Common myeloid progenitor, CD34-positive (primary cell): ENCODE measurements at regions of chr15 and their contacts with region 1.

Region 1: GRCh38 chr15:92808978-92809879 is 90.9 kb upstream of the CHD2 start:
- DNase-seq: peak; percentile 98 to 99 (median 99)
- H3K4me3 ChIP-seq: peak overlapping the region; percentile 29 to 81 (median 75)
- H3K27ac ChIP-seq: peak overlapping the region; percentile 96
- H3K4me1 ChIP-seq: peaks cover 19 to 50% (median 33%) of the 10 kb centered on the region in 4 experiments
- H3K27me3 ChIP-seq: no peaks in the 10 kb centered on the region

Region 2: DNA sequence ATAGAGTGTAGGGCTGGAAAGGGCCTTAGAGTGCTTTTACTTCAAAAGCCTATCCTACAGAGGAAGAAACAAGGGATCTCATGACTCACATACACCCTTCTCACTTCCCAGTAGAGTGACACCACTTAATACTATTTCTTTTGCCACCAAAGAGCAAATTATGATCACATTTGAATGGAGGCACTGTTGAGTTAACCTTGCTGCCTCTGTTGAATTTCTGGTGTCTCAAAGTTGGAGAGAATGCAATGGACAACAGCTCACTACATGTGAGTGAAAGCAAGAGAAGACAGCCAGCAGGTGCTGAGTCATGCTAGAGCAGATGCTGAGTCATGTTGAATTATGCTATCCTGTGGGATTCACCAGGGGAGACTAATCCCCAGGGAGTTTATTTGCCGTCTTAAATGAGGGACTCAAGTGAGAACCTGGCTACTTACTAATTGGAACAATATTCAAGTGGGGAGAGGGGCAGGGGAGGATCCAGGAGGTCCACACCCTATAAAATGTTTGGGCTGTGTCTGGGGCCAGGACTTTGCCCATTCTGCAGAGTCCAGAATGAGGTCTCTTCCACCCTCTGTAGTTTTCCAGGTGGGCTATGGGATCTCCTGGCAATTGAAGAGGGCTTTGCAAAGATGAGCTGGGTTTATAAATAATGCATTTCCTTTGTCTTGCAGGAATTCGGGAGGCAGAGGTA is 379.7 kb before region 1 on chr15:
- CTCF ChIA-PET with region 1: no interaction called
- POLR2A ChIA-PET with region 1: no interaction called
- DNase-seq: peak in 2 of 3 donors; percentile 4 to 6
- H3K4me3 ChIP-seq: no peak overlapping the region
- H3K27ac ChIP-seq: no peak overlapping the region
- H3K4me1 ChIP-seq: no peaks in the 10 kb centered on the region
- H3K27me3 ChIP-seq: peaks cover 0 to 4% (median 2%) of the 10 kb centered on the region in 5 experiments

Region 3: DNA sequence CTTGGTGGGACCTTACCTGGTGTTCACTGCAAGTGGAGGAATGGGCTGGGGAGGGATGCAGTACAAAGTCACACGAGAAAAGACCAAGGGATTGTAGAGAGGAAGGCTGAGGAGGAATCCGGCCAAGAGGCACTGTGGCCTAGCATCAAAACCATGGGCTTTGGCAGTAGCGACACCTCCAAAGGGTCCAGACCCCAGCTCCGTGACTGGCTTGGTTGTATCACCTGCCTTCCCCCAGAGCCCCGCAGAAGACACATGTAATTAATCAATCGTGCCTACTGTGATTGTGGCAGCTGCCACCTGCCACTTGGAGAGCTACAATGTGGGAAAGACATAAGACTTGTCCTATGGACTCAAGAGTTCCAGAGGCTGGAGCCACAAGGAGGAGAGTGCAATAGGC is 360.9 kb before region 1 on chr15:
- CTCF ChIA-PET with region 1: no interaction called
- POLR2A ChIA-PET with region 1: no interaction called
- DNase-seq: no peak
- H3K4me3 ChIP-seq: no peak overlapping the region
- H3K27ac ChIP-seq: no peak overlapping the region
- H3K4me1 ChIP-seq: no peaks in the 10 kb centered on the region
- H3K27me3 ChIP-seq: peaks cover 0 to 2% (median 0%) of the 10 kb centered on the region in 5 experiments

Region 4: GRCh38 chr15:92820236-92821021 is 11.2 kb after region 1 on chr15:
- CTCF ChIA-PET with region 1: interaction called, 13 read pairs
- POLR2A ChIA-PET with region 1: interaction called, 6 read pairs
- DNase-seq: peak; percentile 83 to 88 (median 88)
- H3K4me3 ChIP-seq: peak overlapping the region in 6 of 7 experiments; percentile 61 to 93 (median 78)
- H3K27ac ChIP-seq: peak overlapping the region; percentile 69 to 87
- H3K4me1 ChIP-seq: peaks cover 13 to 54% (median 29%) of the 10 kb centered on the region in 4 experiments
- H3K27me3 ChIP-seq: no peaks in the 10 kb centered on the region

Region 5: GRCh38 chr15:92831655-92832328 is 22.6 kb after region 1 on chr15:
- CTCF ChIA-PET with region 1: interaction called, 8 read pairs
- POLR2A ChIA-PET with region 1: interaction called, 25 read pairs
- DNase-seq: peak; percentile 91 to 97 (median 95)
- H3K4me3 ChIP-seq: peak overlapping the region in 5 of 7 experiments; percentile 8 to 53 (median 42)
- H3K27ac ChIP-seq: peak overlapping the region; percentile 80 to 88
- H3K4me1 ChIP-seq: peaks cover 21 to 56% (median 39%) of the 10 kb centered on the region in 4 experiments
- H3K27me3 ChIP-seq: no peaks in the 10 kb centered on the region

Region 6: GRCh38 chr15:92881802-92882696 is 72.8 kb after region 1 on chr15:
- CTCF ChIA-PET with region 1: interaction called, 29 read pairs
- POLR2A ChIA-PET with region 1: interaction called, 83 read pairs
- DNase-seq: peak; percentile 99 to 100 (median 100)
- H3K4me3 ChIP-seq: peak overlapping the region in 6 of 7 experiments; percentile 48 to 91 (median 66)
- H3K27ac ChIP-seq: peak overlapping the region; percentile 81 to 97
- H3K4me1 ChIP-seq: peaks cover 19 to 46% (median 39%) of the 10 kb centered on the region in 4 experiments
- H3K27me3 ChIP-seq: no peaks in the 10 kb centered on the region

Region 7: DNA sequence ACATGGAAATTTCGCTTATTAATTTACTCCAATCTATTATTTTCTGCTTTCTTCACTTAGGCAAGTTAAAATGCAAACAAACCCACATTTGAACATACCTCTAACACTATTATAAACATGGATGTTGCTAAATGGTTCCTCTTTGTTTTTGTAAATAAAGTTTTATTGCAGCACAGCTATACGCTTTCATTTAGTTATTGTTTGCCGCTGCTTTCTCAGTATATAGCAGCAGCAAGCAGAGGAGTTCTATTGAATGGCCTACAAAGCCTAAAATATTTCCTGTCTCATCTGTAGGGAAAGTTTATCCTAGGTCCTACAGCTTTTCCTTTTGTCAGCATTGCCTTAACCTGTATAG is 82.9 kb after region 1 on chr15:
- CTCF ChIA-PET with region 1: interaction called, 18 read pairs
- POLR2A ChIA-PET with region 1: interaction called, 5 read pairs
- DNase-seq: no peak
- H3K4me3 ChIP-seq: no peak overlapping the region
- H3K27ac ChIP-seq: no peak overlapping the region
- H3K4me1 ChIP-seq: peaks cover 0 to 12% (median 4%) of the 10 kb centered on the region in 4 experiments
- H3K27me3 ChIP-seq: no peaks in the 10 kb centered on the region

Region 8: GRCh38 chr15:92903941-92904831 is 95.0 kb after region 1 on chr15:
- CTCF ChIA-PET with region 1: interaction called, 24 read pairs
- POLR2A ChIA-PET with region 1: interaction called, 44 read pairs
- DNase-seq: peak; percentile 98 to 99 (median 99)
- H3K4me3 ChIP-seq: peak overlapping the region; percentile 30 to 100 (median 92)
- H3K27ac ChIP-seq: peak overlapping the region; percentile 99 to 100
- H3K4me1 ChIP-seq: peaks cover 46 to 65% (median 55%) of the 10 kb centered on the region in 4 experiments
- H3K27me3 ChIP-seq: no peaks in the 10 kb centered on the region

Region 9: DNA sequence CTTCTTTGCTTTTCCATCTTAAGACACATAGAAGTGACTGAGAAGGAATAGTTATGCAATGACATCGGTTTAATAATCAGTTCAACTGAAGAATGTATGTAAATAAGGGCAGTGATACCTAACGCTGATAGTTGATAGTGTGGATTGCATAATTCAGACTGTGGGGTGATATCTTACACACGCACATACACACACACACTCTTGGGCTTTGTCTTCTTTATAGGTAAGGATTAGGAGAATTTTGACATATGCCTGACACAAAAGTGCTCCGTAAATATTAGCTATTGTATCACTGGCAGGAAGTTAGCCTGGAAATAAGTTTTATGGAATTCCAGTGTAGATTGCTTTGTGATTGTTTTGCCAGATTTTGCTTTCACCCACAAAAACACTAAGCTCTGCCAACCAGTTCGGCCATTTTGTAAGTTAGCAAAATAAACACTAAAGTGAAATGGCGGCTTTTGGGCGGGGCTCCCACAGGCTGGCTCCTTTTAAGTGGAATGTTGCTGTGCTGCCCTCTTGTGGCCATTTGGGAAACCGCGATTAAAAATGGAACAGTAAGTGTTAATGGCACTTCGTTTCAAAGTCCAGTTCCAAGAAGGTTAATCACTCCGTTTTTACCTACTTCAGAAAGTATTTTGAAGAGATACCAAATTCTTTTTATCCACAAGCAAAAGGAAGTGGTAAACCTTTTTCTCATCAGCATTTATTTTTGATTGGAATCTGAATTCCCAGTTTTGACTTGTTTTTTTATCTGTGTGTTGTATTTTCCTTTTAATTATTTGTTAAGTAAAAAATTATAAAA is 108.6 kb after region 1 on chr15:
- CTCF ChIA-PET with region 1: interaction called, 99 read pairs
- POLR2A ChIA-PET with region 1: interaction called, 11 read pairs
- DNase-seq: peak; percentile 94 to 96 (median 94)
- H3K4me3 ChIP-seq: peak overlapping the region in 2 of 7 experiments; percentile 25 to 34
- H3K27ac ChIP-seq: peak overlapping the region in 1 of 2 experiments; percentile 52
- H3K4me1 ChIP-seq: peaks cover 26 to 64% (median 44%) of the 10 kb centered on the region in 4 experiments
- H3K27me3 ChIP-seq: no peaks in the 10 kb centered on the region